ENCODE measurements at regions of chr12 and their contacts with region 1.

Region 1: DNA sequence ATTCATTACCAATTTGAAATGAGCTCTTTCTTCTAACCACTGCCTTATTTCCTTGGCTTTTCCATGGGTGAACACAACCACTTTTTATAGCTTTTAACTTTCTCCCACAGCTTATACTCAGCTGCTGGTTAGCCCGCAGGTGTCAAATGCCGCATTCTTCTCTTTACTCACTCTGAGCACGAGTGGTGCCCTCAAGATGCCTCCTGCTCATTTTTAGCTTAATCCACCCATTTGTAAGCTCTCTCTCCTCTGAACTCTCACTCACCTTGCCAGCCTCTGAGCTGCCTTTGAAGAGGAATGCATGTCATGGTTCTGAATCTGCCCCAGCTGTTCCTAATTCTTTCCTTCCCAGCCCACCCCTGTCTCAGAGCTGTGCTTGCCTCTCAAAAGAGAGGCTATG is 449.4 kb upstream of the PRICKLE1 start:
- DNase-seq: no peak
- H3K4me3 ChIP-seq: no peak overlapping the region
- H3K27ac ChIP-seq: no peak overlapping the region
- H3K4me1 ChIP-seq: no peaks in the 10 kb centered on the region
- H3K27me3 ChIP-seq: no peaks in the 10 kb centered on the region
- CTCF ChIP-seq: no peak

Region 2: DNA sequence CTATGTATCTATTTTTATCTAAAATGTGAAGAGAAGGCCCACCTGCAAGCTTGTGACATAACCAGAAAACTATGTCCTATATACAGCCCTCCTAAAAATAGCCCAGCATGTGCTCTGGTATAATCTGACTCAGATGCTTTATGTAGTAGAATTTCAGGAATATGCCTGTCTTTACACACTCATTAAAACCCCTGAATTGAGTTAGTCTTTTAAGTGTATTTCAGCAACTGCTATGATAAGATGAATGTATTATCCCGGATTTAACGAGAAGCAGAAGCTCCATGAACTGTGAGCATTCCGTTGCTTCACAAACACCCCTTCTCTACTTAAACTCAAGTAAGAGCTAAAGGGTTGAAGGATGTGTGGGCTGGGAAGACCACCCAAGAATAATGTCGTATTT is 359.5 kb before region 1 on chr12:
- intact Hi-C with region 1: loop called (anchors 5 kb)
- DNase-seq: no peak
- H3K4me3 ChIP-seq: no peak overlapping the region
- H3K27ac ChIP-seq: no peak overlapping the region
- H3K4me1 ChIP-seq: peaks cover 0 to 12% (median 0%) of the 10 kb centered on the region in 4 donors
- H3K27me3 ChIP-seq: no peaks in the 10 kb centered on the region
- CTCF ChIP-seq: no peak

Region 3: GRCh38 chr12:43277651-43278540 is 238.9 kb after region 1 on chr12:
- intact Hi-C with region 1: no loop called
- DNase-seq: no peak
- H3K4me3 ChIP-seq: no peak overlapping the region
- H3K27ac ChIP-seq: no peak overlapping the region
- H3K4me1 ChIP-seq: no peaks in the 10 kb centered on the region
- H3K27me3 ChIP-seq: no peaks in the 10 kb centered on the region
- CTCF ChIP-seq: no peak

Measured in tibial artery (tissue), 4 donors.